ENCODE measurements at regions of chr10 and their contacts with region 1.

Region 1: GRCh38 chr10:5466418-5467154 is 32.8 kb downstream of the CALML5 start:
- DNase-seq: peak; percentile 37
- H3K4me3 ChIP-seq: no peak overlapping the region
- CTCF ChIP-seq: no peak

Region 2: DNA sequence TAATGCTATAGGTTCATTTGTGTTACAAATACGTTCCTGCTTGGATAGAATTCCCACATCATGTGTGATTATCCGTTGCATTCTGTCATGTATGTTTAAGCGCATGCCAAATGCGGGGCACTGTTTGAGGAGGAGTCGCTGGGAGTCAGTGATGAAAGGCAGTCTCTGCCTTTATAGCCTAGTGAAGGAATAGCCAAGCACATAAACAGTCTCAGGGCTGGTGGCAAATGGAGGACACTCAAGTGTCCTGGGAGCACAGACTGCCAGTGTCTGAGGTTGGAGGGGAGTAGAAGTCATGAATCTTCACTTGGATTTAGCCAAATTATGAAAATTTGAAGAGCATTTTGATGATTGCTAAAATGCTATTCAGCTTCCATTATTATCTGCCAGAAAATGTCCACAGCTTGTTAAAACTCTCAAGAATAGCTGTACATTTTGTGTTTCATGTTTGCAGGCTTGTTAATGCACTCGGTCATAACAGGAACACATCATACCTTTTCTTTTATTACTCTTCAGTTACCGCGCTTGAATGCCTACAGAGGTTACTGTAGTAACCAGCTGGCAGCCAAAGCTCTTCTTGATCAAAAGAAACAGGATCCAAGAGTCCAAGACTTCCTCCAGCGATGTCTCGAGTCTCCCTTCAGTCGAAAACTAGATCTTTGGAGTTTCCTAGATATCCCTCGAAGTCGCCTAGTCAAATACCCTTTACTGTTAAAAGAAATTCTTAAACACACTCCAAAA is 12.7 kb before region 1 on chr10:
- CTCF ChIA-PET with region 1: interaction called, 23 read pairs
- POLR2A ChIA-PET with region 1: interaction called, 3 read pairs
- DNase-seq: no peak
- H3K4me3 ChIP-seq: no peak overlapping the region
- CTCF ChIP-seq: no peak

Region 3: GRCh38 chr10:5498791-5499492 is 32.4 kb after region 1 on chr10:
- CTCF ChIA-PET with region 1: no interaction called
- POLR2A ChIA-PET with region 1: no interaction called
- DNase-seq: no peak
- H3K4me3 ChIP-seq: no peak overlapping the region
- CTCF ChIP-seq: no peak